ENCODE measurements at regions of chr3 and their contacts with region 1.

Region 1: DNA sequence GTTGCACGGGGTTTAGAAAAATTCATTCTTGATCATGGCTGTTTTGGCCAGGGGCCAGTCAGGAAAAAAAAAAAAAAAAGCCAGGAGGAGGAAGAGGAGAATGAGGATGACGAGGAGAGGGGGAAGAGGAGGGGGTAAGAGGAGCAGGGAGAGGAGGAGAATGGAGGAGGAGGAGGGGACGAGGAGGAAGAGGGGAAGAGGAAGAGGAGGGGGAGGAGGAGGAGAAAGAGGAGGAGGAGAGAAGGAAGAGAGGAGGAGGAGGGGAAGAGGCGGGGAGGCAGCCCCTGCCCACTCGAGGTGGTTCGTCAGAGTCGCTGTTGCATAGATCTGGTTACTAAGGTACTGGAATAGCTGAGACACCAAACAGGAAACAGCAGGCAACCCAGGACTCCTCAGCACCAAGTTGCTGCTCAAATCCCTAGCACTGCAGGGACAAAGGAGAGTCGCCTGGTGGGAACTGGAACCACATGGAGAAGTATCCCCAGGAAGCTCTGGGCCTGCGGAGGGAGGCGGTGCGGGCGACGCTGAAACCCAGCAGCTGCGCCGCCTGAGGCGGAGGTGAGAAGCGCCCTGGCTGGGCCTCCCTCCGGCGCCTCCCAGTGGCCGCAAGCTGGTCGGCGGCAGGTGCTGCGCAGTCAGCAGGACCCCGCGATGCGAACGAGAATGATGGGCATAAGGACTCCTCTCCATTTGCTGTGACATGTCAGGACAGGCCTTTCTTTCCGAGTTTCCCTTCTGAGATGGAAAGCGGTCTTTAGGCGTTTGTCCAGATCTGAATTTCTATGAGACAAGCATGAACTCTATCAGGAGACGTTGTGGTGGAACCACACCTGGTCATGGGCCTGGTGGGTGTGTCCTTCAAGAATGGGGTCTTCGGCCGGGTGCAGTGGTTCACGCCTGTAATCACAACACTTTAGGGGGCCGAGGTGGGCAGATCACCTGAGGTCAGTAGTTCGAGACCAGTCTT is 17.5 kb downstream of the FAM240A start:
- DNase-seq: peak; percentile 74 to 92 (median 86)
- ATAC-seq: peak; percentile 80 to 94 (median 91)
- H3K4me3 ChIP-seq: peak overlapping the region in 9 of 12 donors; percentile 28 to 54 (median 40)
- H3K27ac ChIP-seq: peak overlapping the region in 11 of 12 donors; percentile 47 to 68 (median 62)
- H3K4me1 ChIP-seq: peaks cover 0 to 15% (median 9%) of the 10 kb centered on the region in 12 donors
- H3K27me3 ChIP-seq: peaks cover 0 to 3% (median 0%) of the 10 kb centered on the region in 9 donors
- CTCF ChIP-seq: peak; percentile 89 to 100 (median 98)
- POLR2A ChIP-seq: no peak

Region 2: DNA sequence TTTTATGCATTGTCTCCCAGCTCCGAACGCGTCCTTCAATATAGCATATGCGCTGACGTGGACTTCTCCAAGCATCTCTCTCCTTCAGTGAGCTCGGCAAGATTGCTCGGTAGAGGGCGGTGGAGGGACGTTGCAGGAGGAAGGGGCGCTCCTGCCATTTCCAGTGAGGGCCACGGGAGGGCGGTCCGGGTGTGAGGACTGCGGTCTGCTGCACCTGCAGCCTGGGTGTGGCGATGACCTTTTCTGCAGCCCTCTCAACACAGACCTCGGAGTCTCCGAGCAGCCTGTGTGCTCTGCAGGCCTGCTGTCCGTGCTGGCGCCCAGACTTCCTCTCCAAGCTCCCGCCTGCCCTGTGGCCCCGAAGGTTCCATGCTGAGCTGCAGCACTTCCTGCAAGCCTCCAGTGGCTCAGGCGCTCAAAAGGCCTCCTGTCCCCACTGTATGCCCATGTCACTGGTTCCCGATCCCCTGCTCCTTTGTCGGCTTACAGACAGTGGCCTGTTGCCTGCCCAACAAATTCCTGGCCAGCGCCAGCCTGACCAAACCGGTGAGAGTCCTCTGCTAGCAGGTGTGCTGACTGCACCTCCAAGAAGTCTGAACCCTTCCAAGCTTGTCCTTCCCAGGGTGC is 141.0 kb before region 1 on chr3:
- intact Hi-C with region 1: loop called (anchors 1 to 10 kb)
- DNase-seq: peak; percentile 88 to 95 (median 93)
- ATAC-seq: peak; percentile 79 to 94 (median 93)
- H3K4me3 ChIP-seq: peak overlapping the region in 2 of 12 donors; percentile 30
- H3K27ac ChIP-seq: peak overlapping the region in 1 of 12 donors; percentile 8
- H3K4me1 ChIP-seq: peaks cover 0 to 21% (median 2%) of the 10 kb centered on the region in 12 donors
- H3K27me3 ChIP-seq: no peaks in the 10 kb centered on the region
- CTCF ChIP-seq: peak; percentile 94 to 100 (median 98)
- POLR2A ChIP-seq: no peak

Region 3: DNA sequence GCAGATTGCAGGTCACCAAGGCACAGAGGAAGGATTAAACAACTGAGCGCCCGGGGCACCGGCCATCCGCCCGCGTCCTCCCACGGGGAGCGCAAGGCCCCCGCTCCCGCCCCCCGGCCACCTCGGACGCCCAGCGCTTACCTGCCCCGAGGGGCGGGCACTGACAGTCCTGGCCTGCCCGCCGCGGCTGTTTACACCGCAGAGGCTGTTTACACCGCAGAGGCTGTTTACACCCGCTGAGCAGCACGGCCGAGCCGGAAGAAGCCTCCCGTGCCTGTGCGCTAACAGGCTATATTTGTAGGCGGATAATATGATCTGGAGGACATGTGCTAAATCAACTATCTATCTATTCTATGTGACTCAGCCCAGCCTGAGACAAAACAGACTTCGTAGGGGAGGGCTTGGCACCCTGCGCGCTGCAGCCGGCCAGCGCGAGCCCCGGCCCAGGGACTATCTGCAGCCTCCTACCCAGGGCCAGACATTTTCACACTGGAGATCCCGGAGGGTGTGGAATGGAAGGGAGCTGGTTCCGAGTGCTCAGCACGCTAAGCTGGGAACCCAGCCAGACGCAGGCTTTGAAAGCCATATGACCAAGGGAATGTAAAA is 63.7 kb before region 1 on chr3 and contains the start of gene LRRC2:
- intact Hi-C with region 1: loop called in 7 of 10 experiments (anchors 5 to 10 kb)
- DNase-seq: peak; percentile 73 to 87 (median 77)
- ATAC-seq: peak; percentile 58 to 82 (median 76)
- H3K4me3 ChIP-seq: peak within 1 kb of the TSS; percentile 21 to 72 (median 66)
- H3K27ac ChIP-seq: peak within 1 kb of the TSS; percentile 80 to 99 (median 92)
- H3K4me1 ChIP-seq: peaks cover 0 to 38% (median 12%) of the 10 kb centered on the region in 12 donors
- H3K27me3 ChIP-seq: peaks cover 0 to 24% (median 0%) of the 10 kb centered on the region in 9 donors
- CTCF ChIP-seq: no peak
- POLR2A ChIP-seq: peak in 1 of 2 donors; percentile 19
- total RNA-seq, gene LRRC2: 74.4 to 147 (median 97.3) TPM

Region 4: GRCh38 chr3:46578973-46579755 is 50.7 kb before region 1 on chr3:
- intact Hi-C with region 1: loop called in 4 of 10 experiments (anchors 2 to 10 kb)
- DNase-seq: no peak
- ATAC-seq: peak in 2 of 4 donors; percentile 46 to 61
- H3K4me3 ChIP-seq: no peak overlapping the region
- H3K27ac ChIP-seq: no peak overlapping the region
- H3K4me1 ChIP-seq: peaks cover 0 to 13% (median 3%) of the 10 kb centered on the region in 12 donors
- H3K27me3 ChIP-seq: peaks cover 0 to 18% (median 0%) of the 10 kb centered on the region in 9 donors
- CTCF ChIP-seq: no peak
- POLR2A ChIP-seq: no peak

Measured in heart left ventricle (tissue), 16 donors.